ENCODE measurements at regions of chr4 and their contacts with region 1.

Region 1: DNA sequence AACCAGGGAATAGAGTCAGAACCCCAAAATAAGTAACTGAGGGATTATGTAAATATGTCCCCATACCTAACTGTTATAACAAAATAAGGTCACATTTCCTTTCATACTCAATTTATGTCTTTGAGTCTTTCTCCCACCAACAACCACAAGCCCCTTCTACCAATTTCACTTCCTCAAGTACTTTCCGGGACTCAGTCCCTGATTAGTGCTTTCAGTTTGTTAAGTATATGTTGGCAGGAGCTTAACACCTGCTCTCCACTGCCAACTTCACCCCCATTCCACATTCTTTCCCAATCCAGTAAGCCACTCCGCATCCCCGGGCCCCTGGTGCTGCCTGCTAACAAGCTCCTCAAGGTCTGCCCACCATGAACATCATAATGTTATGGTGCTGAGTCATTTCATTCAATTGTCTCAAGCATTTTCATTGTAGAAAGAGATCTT is 71.3 kb upstream of the SPRY1 start:
- DNase-seq: no peak
- H3K4me3 Mint-ChIP-seq: no peak overlapping the region
- H3K27ac Mint-ChIP-seq: no peak overlapping the region
- H3K4me1 Mint-ChIP-seq: no peaks in the 10 kb centered on the region
- H3K27me3 Mint-ChIP-seq: no peaks in the 10 kb centered on the region

Region 2: DNA sequence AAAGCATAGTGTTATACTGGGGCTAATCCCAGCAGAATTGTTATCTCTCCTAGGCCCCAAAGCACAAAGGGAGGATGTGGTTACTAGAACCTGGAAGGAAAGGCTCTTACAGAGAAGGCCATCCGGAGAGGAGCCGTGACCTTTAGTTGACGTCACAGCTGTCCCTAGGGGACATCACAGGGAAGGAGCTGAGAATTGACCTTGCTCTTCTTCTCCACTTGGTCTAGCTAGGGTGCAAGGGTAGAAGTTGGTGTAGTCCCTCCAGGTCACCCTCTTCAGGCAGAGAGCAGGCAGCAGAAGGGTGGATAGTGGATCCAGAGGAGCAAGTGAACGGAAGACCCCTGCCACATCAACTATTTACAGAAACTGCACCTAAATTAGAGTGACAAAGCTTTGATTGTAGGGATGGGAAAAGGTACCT is 521.5 kb before region 1 on chr4:
- CTCF ChIA-PET with region 1: no interaction called
- intact Hi-C with region 1: no loop called
- DNase-seq: no peak
- H3K4me3 Mint-ChIP-seq: no peak overlapping the region
- H3K27ac Mint-ChIP-seq: no peak overlapping the region
- H3K4me1 Mint-ChIP-seq: no peaks in the 10 kb centered on the region
- H3K27me3 Mint-ChIP-seq: peaks cover 4% of the 10 kb centered on the region

Region 3: DNA sequence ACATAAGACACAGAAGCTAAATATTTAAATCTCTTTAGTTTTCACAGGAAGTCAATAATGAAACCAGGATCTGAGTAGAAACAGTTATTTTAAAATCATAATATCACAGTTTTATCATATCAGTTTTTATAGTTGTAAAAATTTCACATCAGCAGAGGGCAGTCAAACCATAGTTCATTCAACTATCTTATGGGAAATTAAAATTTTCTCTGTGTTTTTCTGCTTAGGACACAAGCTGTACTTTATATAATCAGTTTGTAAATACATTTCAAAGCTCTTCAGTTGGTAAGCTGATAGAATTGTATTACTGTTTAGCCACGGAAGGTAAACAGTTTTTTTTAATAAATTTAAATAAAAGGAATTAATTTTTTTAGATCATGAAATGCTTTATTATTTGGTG is 198.0 kb before region 1 on chr4:
- CTCF ChIA-PET with region 1: no interaction called
- intact Hi-C with region 1: loop called (anchors 10 kb)
- DNase-seq: no peak
- H3K4me3 Mint-ChIP-seq: no peak overlapping the region
- H3K27ac Mint-ChIP-seq: no peak overlapping the region
- H3K4me1 Mint-ChIP-seq: no peaks in the 10 kb centered on the region
- H3K27me3 Mint-ChIP-seq: no peaks in the 10 kb centered on the region

Region 4: DNA sequence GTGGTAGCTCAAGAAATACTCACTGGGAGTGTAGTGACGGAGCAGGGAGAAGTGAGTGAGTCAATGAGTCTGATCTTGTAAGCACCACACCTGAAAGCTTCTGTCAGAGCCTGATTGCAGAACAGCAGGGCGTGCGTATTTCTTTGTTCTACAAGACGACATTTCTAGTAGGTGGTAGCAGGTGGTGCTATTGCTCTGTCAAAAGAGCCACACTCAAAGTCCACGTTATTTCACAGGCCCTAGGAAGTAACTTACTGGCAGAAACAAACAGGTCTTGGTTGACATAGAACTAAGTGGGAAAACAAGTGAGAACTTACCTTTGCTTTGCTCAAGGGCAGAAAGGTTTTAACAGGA is 24.9 kb after region 1 on chr4:
- CTCF ChIA-PET with region 1: no interaction called
- intact Hi-C with region 1: no loop called
- DNase-seq: peak; percentile 20
- H3K4me3 Mint-ChIP-seq: no peak overlapping the region
- H3K27ac Mint-ChIP-seq: no peak overlapping the region
- H3K4me1 Mint-ChIP-seq: peaks cover 2% of the 10 kb centered on the region
- H3K27me3 Mint-ChIP-seq: peaks cover 7% of the 10 kb centered on the region

Region 5: DNA sequence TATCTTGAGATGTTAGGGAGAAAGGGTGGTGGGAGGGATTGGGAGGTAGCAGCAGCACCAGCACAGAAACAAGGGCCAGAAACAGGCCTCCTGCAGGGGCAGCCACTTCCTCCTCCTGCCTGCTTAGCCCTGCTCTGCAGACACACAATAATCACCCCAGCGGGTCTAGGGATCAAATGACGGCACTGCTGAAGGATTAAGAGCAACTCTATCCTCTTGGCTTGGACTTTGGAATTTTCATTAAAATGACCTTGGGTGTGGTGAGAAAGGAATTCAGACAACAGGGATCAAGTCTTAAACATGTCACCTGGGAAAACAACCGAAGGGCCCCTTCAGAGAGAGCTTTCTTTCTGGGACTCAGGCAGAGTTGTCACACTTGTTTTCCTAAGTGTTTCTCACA is 424.8 kb after region 1 on chr4:
- CTCF ChIA-PET with region 1: no interaction called
- intact Hi-C with region 1: no loop called
- DNase-seq: no peak
- H3K4me3 Mint-ChIP-seq: no peak overlapping the region
- H3K27ac Mint-ChIP-seq: no peak overlapping the region
- H3K4me1 Mint-ChIP-seq: no peaks in the 10 kb centered on the region
- H3K27me3 Mint-ChIP-seq: peaks cover 12% of the 10 kb centered on the region